Prostate gland (tissue), 2 donors: ENCODE measurements at regions of chr19 and their contacts with region 1.

Region 1: DNA sequence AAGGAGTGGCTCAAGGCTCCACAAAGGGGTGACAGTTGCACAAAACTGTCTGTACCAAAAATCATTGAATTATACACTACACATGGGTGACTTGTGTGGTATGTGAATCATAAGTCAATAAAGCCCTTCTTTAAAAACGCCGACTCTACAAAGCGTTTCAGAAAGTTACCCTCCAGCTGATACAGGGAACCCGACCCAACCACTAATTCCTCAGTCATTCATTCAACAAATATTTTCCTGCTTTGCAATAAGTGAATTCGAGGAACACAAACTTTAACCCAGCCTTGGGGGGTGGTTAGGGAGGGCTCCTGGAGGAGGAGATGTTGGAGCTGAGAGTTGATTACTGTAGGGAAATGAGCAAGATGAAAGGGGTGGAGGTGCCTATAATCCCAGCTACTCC is 32.0 kb downstream of the LTBP4 start:
- DNase-seq: no peak
- H3K4me3 ChIP-seq: no peak overlapping the region
- H3K27ac ChIP-seq: no peak overlapping the region
- H3K4me1 ChIP-seq: peaks cover 3% of the 10 kb centered on the region
- H3K27me3 ChIP-seq: no peaks in the 10 kb centered on the region
- CTCF ChIP-seq: no peak
- POLR2A ChIP-seq: no peak

Region 2: GRCh38 chr19:40529093-40529954 is 103.9 kb before region 1 on chr19:
- intact Hi-C with region 1: loop called (anchors 5 kb)
- DNase-seq: peak; percentile 82
- H3K4me3 ChIP-seq: peak overlapping the region; percentile 33 to 35
- H3K27ac ChIP-seq: peak overlapping the region in 1 of 2 donors; percentile 65
- H3K4me1 ChIP-seq: no peaks in the 10 kb centered on the region
- H3K27me3 ChIP-seq: no peaks in the 10 kb centered on the region
- CTCF ChIP-seq: peak; percentile 78 to 98 (median 96)
- POLR2A ChIP-seq: peak; percentile 17

Region 3: GRCh38 chr19:40549007-40549708 is 84.0 kb before region 1 on chr19:
- intact Hi-C with region 1: loop called (anchors 5 kb)
- DNase-seq: peak; percentile 42
- H3K4me3 ChIP-seq: peak overlapping the region in 1 of 2 donors; percentile 8
- H3K27ac ChIP-seq: no peak overlapping the region
- H3K4me1 ChIP-seq: no peaks in the 10 kb centered on the region
- H3K27me3 ChIP-seq: no peaks in the 10 kb centered on the region
- CTCF ChIP-seq: peak in 3 of 4 experiments; percentile 40 to 54 (median 53)
- POLR2A ChIP-seq: no peak

Region 4: GRCh38 chr19:40716655-40717324 is 83.6 kb after region 1 on chr19 and contains the starts of genes COQ8B and ITPKC:
- intact Hi-C with region 1: no loop called
- DNase-seq: peak; percentile 99
- H3K4me3 ChIP-seq: peak within 1 kb of the TSS; percentile 79 to 85
- H3K27ac ChIP-seq: peak within 1 kb of the TSS; percentile 99 to 100
- H3K4me1 ChIP-seq: no peaks in the 10 kb centered on the region
- H3K27me3 ChIP-seq: no peaks in the 10 kb centered on the region
- CTCF ChIP-seq: peak in 2 of 4 experiments; percentile 49 to 54
- POLR2A ChIP-seq: peak; percentile 92
- total RNA-seq, gene COQ8B: 61.2 to 64.4 TPM
- total RNA-seq, gene ITPKC: 40.8 to 44.5 TPM